Sigmoid colon (tissue), 7 donors: ENCODE measurements at regions of chr1 and their contacts with region 1.

Region 1: DNA sequence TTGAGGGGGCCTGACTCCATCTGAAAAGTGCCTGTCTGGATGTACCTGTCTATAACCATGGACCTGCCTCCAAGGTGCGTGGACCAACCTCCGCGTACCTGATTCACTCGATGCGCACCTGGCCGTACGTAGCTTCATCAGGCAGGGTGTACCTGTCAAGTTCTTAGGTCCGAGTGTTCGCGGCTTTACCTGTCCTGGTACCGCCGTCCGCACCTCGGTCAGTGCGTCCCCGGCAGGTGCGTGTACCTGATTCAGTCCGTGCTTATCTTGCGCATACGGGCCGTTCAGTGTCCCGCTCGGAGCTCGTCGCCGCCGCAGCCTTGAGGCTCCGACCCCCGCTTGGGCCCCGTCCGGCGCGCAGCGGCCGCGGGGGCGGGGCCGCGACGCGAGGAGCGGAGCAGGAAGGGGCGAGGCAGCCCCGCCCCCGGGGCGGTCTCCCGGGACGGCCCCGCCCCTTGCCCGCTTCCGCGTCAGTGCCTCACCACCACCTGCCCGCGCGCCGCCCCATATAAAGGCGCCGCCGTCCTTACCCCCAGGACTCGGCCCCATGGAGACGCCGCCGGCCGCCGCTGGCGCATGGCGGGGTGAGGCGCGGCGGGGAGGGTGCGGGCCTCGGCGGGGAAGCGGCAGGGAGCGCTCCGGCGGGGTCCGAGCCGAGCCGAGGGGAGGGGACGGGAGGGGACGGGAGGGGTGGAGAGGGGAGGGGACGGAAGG is at the start of gene ZC3H12A:
- DNase-seq: peak; percentile 96
- H3K4me3 ChIP-seq: peak within 1 kb of the TSS; percentile 77 to 93 (median 81)
- H3K27ac ChIP-seq: peak within 1 kb of the TSS; percentile 94 to 99 (median 96)
- H3K4me1 ChIP-seq: peaks cover 0 to 81% (median 77%) of the 10 kb centered on the region in 4 donors
- H3K27me3 ChIP-seq: no peaks in the 10 kb centered on the region
- CTCF ChIP-seq: no peak
- EP300 ChIP-seq: no peak
- POLR2A ChIP-seq: peak; percentile 4 to 32
- total RNA-seq, gene ZC3H12A: 7.4 to 25.8 (median 8.5) TPM

Region 2: DNA sequence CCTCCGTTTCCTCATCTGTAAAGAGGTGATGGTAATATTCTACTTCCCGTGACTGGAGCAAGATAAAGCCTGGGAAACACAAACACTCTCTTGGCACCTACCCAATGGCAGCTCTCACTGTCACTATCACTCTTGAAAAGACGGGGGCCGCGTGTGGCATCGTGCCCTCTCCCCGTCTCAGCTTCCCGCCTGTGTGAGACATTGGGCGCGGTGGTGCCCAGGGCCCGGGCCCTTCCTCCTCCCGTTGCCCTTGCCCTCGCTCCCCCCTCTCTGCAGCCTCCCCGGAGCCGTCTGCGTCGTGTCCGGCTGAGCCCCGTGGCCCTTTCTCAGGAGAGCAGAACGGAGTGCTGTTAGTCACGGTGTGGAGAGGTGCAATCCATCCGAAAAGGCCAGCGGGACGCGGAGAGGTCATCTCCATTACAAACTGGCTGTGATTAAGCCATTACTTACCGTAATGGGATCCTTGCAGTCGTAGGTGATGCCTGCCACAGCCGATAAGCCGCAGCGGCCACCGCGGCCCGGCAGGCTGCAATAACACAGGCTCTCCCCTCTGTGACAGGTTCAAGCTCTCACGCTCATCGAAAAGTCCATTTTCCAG is 156.2 kb before region 1 on chr1:
- intact Hi-C with region 1: no loop called
- DNase-seq: no peak
- H3K4me3 ChIP-seq: no peak overlapping the region
- H3K27ac ChIP-seq: no peak overlapping the region
- H3K4me1 ChIP-seq: peaks cover 0 to 12% (median 4%) of the 10 kb centered on the region in 4 donors
- H3K27me3 ChIP-seq: peaks cover 18 to 82% (median 31%) of the 10 kb centered on the region in 3 donors
- CTCF ChIP-seq: no peak
- EP300 ChIP-seq: no peak
- POLR2A ChIP-seq: no peak

Region 3: DNA sequence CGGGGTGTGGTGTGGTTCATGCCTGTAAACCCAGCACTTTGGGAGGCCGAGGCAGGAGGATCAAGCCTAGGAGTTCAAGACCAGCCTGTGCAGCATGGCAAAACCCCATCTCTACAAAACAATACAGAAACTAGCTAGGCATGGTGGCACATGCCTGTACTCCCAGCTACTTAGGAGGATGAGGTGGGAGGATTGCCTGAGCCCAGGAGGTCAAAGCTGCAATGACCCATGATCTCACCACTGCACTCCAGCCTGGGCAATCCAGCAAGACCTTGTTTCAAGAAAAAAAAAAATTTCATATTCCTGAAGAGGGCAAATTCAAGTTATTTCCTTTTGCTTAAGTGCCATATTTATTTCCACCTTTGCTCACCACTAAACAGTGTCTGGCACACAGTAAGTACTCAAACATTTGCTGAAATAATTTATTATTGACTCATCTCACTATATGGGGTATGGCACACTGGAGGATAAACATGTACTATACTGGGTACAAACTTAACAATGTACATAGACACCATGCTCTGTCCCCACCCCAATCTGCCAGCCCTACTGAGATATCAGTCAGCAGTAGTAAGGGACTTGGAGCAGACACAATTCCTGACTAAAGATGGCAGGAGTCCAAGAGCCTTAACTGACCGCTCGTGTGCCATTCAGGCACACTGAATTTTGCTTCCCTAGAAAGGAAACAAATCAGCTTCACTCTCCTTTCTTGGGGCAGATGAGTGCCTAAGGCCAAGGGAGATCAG is 24.8 kb after region 1 on chr1:
- intact Hi-C with region 1: loop called (anchors 1 kb)
- DNase-seq: no peak
- H3K4me3 ChIP-seq: no peak overlapping the region
- H3K27ac ChIP-seq: peak overlapping the region; percentile 39 to 81 (median 71)
- H3K4me1 ChIP-seq: peaks cover 0 to 38% (median 23%) of the 10 kb centered on the region in 4 donors
- H3K27me3 ChIP-seq: no peaks in the 10 kb centered on the region
- CTCF ChIP-seq: no peak
- EP300 ChIP-seq: no peak
- POLR2A ChIP-seq: no peak

Region 4: DNA sequence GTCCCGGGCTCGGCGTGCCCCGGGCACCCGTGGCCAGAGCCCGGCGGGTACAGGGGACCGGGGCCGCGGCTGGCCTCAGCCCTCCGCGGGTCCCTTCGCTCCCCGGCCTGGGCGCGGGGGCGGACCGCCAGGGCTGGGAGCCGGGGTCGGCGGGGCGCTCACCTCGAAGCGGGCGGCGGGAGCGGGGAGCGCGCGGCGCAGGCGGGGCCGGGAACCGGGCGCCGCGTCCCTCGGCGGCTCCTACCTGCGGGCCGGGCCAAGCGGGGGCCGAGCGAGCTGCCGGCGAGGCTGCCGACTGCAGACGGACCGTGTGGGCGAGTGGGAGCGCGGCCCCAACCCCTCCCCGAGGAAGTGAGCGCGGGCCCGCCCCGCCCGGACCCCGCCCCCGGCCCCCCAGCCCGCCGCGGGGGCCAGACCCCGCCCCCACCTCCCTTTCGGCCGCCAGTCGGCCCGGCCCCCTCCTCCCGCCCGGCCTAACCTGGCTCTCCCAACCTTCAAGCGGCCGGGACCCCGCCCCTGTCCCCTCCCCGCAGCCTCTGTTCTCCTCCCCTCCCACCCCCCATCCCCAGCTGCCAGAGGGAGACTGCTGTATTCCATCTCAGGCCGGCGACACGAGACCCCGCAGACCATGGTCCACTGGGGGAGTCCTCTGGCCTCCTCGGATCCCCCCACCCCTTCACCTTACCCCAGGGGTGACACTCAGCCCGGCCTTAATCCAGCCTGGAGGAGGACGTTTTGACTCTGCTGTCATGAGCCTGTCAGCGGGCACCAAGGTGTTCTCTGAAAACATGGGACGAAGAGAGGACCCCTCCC is 531.2 kb after region 1 on chr1 and contains the start of gene FHL3:
- intact Hi-C with region 1: loop called (anchors 10 kb)
- DNase-seq: peak; percentile 86
- H3K4me3 ChIP-seq: peak within 1 kb of the TSS; percentile 72 to 91 (median 77)
- H3K27ac ChIP-seq: peak within 1 kb of the TSS; percentile 87 to 97 (median 91)
- H3K4me1 ChIP-seq: peaks cover 0 to 53% (median 41%) of the 10 kb centered on the region in 4 donors
- H3K27me3 ChIP-seq: no peaks in the 10 kb centered on the region
- CTCF ChIP-seq: no peak
- EP300 ChIP-seq: no peak
- POLR2A ChIP-seq: no peak
- total RNA-seq, gene FHL3: 38.9 to 76.4 (median 46.6) TPM